ENCODE measurements at regions of chr12 and their contacts with region 1.

Region 1: DNA sequence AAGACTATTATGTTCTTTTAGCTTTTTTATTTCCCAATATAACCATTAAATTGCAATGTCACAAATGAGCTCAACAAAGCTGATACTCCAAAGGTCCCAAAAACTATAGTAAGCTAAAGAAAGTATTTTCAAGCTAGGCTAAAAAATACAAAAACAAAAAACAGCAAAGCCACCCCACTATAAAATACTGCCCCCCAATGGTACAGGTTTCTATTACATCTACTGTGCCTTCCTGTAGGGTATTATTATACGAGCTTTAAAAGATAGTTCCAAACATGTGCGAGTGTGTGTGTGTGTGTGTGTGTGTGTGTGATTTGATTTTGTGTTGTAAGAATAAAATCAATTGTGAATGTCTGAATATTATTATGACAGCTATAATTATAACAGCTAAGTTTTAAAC is 1.1 kb downstream of the IFNG start:
- DNase-seq: no peak
- ATAC-seq: peak; percentile 55; the same call in 2 of the 3 replicates
- H3K4me3 ChIP-seq: no peak overlapping the region
- H3K27ac ChIP-seq: no peak overlapping the region
- H3K4me1 ChIP-seq: peaks cover 11% of the 10 kb centered on the region
- H3K27me3 ChIP-seq: peaks cover 0 to 3% of the 10 kb centered on the region in 2 experiments; a peak in 1 of 4 replicates
- CTCF ChIP-seq: peak; percentile 38 to 47 (median 41); a peak in 5 of 6 replicates
- EP300 ChIP-seq: no peak
- POLR2A ChIP-seq: no peak
- RAD21 ChIP-seq: peak; percentile 65

Region 2: GRCh38 chr12:68001486-68002466 is 156.7 kb before region 1 on chr12:
- CTCF ChIA-PET with region 1: interaction called, 12 read pairs
- POLR2A ChIA-PET with region 1: no interaction called
- RAD21 ChIA-PET with region 1: interaction called, 8 read pairs
- SMC1A ChIA-PET with region 1: interaction called, 12 read pairs
- in situ Hi-C with region 1: no loop called
- intact Hi-C with region 1: no loop called
- DNase-seq: no peak
- ATAC-seq: peak; percentile 64
- H3K4me3 ChIP-seq: no peak overlapping the region
- H3K27ac ChIP-seq: no peak overlapping the region
- H3K4me1 ChIP-seq: no peaks in the 10 kb centered on the region
- H3K27me3 ChIP-seq: no peaks in the 10 kb centered on the region
- CTCF ChIP-seq: peak; percentile 39 to 44 (median 40); a peak in 5 of 6 replicates
- EP300 ChIP-seq: no peak
- POLR2A ChIP-seq: no peak
- RAD21 ChIP-seq: peak; percentile 51

Region 3: GRCh38 chr12:68040450-68041075 is 117.9 kb before region 1 on chr12:
- CTCF ChIA-PET with region 1: interaction called, 113 read pairs
- POLR2A ChIA-PET with region 1: interaction called, 7 read pairs
- RAD21 ChIA-PET with region 1: interaction called, 56 read pairs
- SMC1A ChIA-PET with region 1: interaction called, 83 read pairs
- in situ Hi-C with region 1: no loop called
- intact Hi-C with region 1: loop called (anchors 1 kb)
- DNase-seq: peak; percentile 26
- ATAC-seq: peak; percentile 76
- H3K4me3 ChIP-seq: no peak overlapping the region
- H3K27ac ChIP-seq: no peak overlapping the region
- H3K4me1 ChIP-seq: peaks cover 11% of the 10 kb centered on the region
- H3K27me3 ChIP-seq: no peaks in the 10 kb centered on the region
- CTCF ChIP-seq: peak; percentile 80 to 89 (median 85)
- EP300 ChIP-seq: no peak
- POLR2A ChIP-seq: no peak
- RAD21 ChIP-seq: peak; percentile 95

Region 4: GRCh38 chr12:68119724-68120211 is 38.7 kb before region 1 on chr12:
- CTCF ChIA-PET with region 1: interaction called, 93 read pairs
- POLR2A ChIA-PET with region 1: no interaction called
- RAD21 ChIA-PET with region 1: interaction called, 25 read pairs
- SMC1A ChIA-PET with region 1: interaction called, 53 read pairs
- in situ Hi-C with region 1: no loop called
- intact Hi-C with region 1: no loop called
- DNase-seq: peak; percentile 73
- ATAC-seq: peak; percentile 93
- H3K4me3 ChIP-seq: no peak overlapping the region
- H3K27ac ChIP-seq: peak overlapping the region; percentile 1; the same call in 1 of the 2 replicates
- H3K4me1 ChIP-seq: peaks cover 12% of the 10 kb centered on the region
- H3K27me3 ChIP-seq: no peaks in the 10 kb centered on the region
- CTCF ChIP-seq: no peak
- EP300 ChIP-seq: peak in 1 of 2 experiments; percentile 39; a peak in 2 of 4 replicates
- POLR2A ChIP-seq: no peak
- RAD21 ChIP-seq: no peak

Region 5: DNA sequence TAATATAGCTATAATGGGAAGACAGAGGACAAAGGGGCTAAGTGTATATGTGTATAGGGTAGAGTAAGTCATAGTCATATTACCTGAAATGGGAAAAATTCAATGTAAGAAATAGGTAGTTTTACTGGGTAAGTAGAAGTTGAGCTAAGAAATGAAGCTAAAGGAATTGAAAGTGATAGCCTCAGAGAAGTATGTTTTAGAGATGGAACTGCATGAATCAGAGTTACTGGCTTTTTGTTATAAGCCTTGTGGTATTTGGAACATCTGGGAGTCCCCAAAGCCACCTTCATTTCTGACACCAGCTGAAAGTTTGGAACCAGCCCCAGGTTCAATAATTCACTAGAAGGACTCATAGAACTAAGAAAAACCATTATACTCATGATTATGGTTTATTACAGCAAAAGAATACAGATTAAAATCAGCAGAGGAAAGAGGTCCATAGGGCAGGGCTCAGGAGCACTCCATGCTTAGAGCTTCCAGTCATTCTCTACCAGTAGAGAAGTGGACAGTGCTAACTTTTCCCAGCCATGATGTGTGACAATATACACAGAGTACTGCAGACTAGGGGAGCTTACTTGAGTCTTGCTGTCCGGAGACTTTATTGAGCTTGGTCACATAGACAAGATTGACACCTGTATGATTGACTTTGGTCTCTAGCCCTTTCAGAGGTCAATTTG is 10.9 kb after region 1 on chr12:
- CTCF ChIA-PET with region 1: interaction called, 11 read pairs
- POLR2A ChIA-PET with region 1: no interaction called
- RAD21 ChIA-PET with region 1: no interaction called
- SMC1A ChIA-PET with region 1: interaction called, 5 read pairs
- in situ Hi-C with region 1: no loop called
- intact Hi-C with region 1: no loop called
- DNase-seq: no peak
- ATAC-seq: no peak
- H3K4me3 ChIP-seq: no peak overlapping the region
- H3K27ac ChIP-seq: no peak overlapping the region
- H3K4me1 ChIP-seq: no peaks in the 10 kb centered on the region
- H3K27me3 ChIP-seq: peaks cover 0 to 3% of the 10 kb centered on the region in 2 experiments; a peak in 1 of 4 replicates
- CTCF ChIP-seq: no peak
- EP300 ChIP-seq: no peak
- POLR2A ChIP-seq: no peak
- RAD21 ChIP-seq: no peak